Colonic mucosa (tissue), 4 donors: ENCODE measurements at regions of chr11 and their contacts with region 1.

Region 1: GRCh38 chr11:103927535-103927934 is 108.9 kb upstream of the DDI1 start:
- DNase-seq: no peak
- H3K4me3 ChIP-seq: no peak overlapping the region
- H3K27ac ChIP-seq: no peak overlapping the region
- H3K4me1 ChIP-seq: no peaks in the 10 kb centered on the region
- H3K27me3 ChIP-seq: no peaks in the 10 kb centered on the region
- CTCF ChIP-seq: peak; percentile 31

Region 2: GRCh38 chr11:103832762-103833161 is 94.8 kb before region 1 on chr11:
- intact Hi-C with region 1: no loop called
- DNase-seq: no peak
- H3K4me3 ChIP-seq: no peak overlapping the region
- H3K27ac ChIP-seq: no peak overlapping the region
- H3K4me1 ChIP-seq: no peaks in the 10 kb centered on the region
- H3K27me3 ChIP-seq: no peaks in the 10 kb centered on the region
- CTCF ChIP-seq: no peak

Region 3: DNA sequence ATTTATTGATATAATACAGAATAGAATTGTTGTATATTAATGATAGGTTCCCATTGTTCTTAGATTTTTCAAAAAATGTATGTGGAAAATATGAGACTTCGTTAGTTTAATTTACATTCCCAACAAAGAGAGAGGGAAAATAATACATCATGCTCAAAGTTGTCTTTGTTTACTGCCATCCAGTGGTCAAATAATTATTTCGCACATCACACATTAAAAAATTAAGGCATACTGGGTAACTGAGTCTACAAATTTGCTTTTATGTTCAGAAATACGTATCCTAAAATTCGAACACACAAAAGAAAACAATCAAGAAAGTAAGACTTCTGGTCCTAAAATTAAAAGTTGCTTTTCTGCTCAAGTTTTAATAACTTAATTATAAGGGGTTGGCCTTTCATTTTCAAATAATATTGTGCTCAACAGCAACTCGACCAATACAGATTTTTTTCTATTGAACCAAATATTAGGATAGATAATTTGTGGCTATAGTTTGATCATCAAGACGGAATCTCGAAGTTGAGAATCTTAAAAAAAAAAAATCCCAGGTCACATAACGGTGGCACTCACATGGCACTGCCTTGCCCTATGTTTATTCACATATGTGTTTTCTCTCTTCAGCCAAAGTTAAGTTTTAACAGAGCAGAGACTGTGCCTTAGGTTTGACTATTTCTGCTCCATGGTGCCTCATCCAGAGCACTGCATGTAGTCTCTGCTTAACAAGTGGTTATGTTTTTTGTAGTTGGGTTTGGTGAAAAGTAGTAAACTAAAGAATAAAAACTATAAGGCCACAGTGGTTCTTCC is 224.1 kb after region 1 on chr11:
- intact Hi-C with region 1: loop called (anchors 5 kb)
- DNase-seq: no peak
- H3K4me3 ChIP-seq: no peak overlapping the region
- H3K27ac ChIP-seq: no peak overlapping the region
- H3K4me1 ChIP-seq: no peaks in the 10 kb centered on the region
- H3K27me3 ChIP-seq: no peaks in the 10 kb centered on the region
- CTCF ChIP-seq: no peak

Region 4: GRCh38 chr11:105211806-105212531 is 1284.4 kb after region 1 on chr11:
- intact Hi-C with region 1: no loop called
- DNase-seq: no peak
- H3K4me3 ChIP-seq: no peak overlapping the region
- H3K27ac ChIP-seq: no peak overlapping the region
- H3K4me1 ChIP-seq: no peaks in the 10 kb centered on the region
- H3K27me3 ChIP-seq: no peaks in the 10 kb centered on the region
- CTCF ChIP-seq: no peak